Calu3 (cell line): ENCODE measurements at regions of chr7 and their contacts with region 1.

Region 1: GRCh38 chr7:13981070-13981469 is 8.4 kb downstream of the ETV1 start:
- DNase-seq: peak; percentile 74
- H3K4me3 Mint-ChIP-seq: peak overlapping the region; percentile 59
- H3K27ac Mint-ChIP-seq: peak overlapping the region; percentile 87
- H3K4me1 Mint-ChIP-seq: peaks cover 34% of the 10 kb centered on the region
- H3K27me3 Mint-ChIP-seq: no peaks in the 10 kb centered on the region
- CTCF ChIP-seq: no peak

Region 2: DNA sequence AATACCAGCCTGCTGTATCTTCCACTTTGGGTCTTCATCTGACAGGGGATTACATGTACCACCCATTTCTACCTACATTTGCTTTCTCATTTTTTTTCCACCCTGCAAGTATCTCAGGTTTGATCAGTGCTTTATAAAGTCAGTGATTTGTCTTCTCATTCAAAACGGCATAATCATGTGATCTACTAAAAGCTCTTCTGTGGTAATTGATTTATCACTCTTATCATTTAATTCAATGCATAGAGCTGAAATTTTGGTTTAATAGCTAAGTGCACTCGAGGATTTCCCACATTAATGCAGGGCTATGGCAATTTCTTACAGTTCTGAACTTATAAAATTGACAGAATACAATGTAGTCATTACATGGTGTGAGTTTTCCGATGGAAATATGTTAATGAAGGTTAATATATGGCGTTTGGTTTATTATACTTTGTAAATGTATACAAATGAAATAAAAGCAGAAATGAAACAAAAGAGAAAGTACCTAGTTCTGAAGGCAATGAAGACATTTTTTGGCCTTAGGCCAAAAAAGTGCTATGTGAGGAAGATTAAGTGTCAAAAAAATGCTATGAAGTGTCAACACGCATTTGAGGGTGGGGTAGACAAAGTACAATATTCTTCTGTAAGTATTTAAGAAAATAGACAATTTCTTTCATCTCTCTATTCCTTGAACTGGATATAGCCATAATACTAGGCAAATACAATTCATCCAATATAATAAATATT is 448.9 kb before region 1 on chr7:
- CTCF ChIA-PET with region 1: no interaction called
- intact Hi-C with region 1: loop called (anchors 5 kb)
- DNase-seq: no peak
- H3K4me3 Mint-ChIP-seq: no peak overlapping the region
- H3K27ac Mint-ChIP-seq: no peak overlapping the region
- H3K4me1 Mint-ChIP-seq: no peaks in the 10 kb centered on the region
- H3K27me3 Mint-ChIP-seq: no peaks in the 10 kb centered on the region
- CTCF ChIP-seq: no peak

Region 3: GRCh38 chr7:13850185-13850752 is 130.8 kb before region 1 on chr7:
- CTCF ChIA-PET with region 1: no interaction called
- intact Hi-C with region 1: loop called (anchors 2 kb)
- DNase-seq: peak; percentile 64
- H3K4me3 Mint-ChIP-seq: peak overlapping the region; percentile 1
- H3K27ac Mint-ChIP-seq: peak overlapping the region; percentile 37
- H3K4me1 Mint-ChIP-seq: peaks cover 20% of the 10 kb centered on the region
- H3K27me3 Mint-ChIP-seq: no peaks in the 10 kb centered on the region
- CTCF ChIP-seq: no peak

Region 4: GRCh38 chr7:13933091-13933490 is 48.0 kb before region 1 on chr7:
- CTCF ChIA-PET with region 1: no interaction called
- intact Hi-C with region 1: no loop called
- DNase-seq: no peak
- H3K4me3 Mint-ChIP-seq: no peak overlapping the region
- H3K27ac Mint-ChIP-seq: no peak overlapping the region
- H3K4me1 Mint-ChIP-seq: no peaks in the 10 kb centered on the region
- H3K27me3 Mint-ChIP-seq: no peaks in the 10 kb centered on the region
- CTCF ChIP-seq: no peak

Region 5: GRCh38 chr7:14293434-14293833 is 312.4 kb after region 1 on chr7:
- CTCF ChIA-PET with region 1: no interaction called
- intact Hi-C with region 1: no loop called
- DNase-seq: no peak
- H3K4me3 Mint-ChIP-seq: no peak overlapping the region
- H3K27ac Mint-ChIP-seq: no peak overlapping the region
- H3K4me1 Mint-ChIP-seq: no peaks in the 10 kb centered on the region
- H3K27me3 Mint-ChIP-seq: no peaks in the 10 kb centered on the region
- CTCF ChIP-seq: no peak

Region 6: GRCh38 chr7:14407246-14408015 is 426.4 kb after region 1 on chr7:
- CTCF ChIA-PET with region 1: no interaction called
- intact Hi-C with region 1: no loop called
- DNase-seq: no peak
- H3K4me3 Mint-ChIP-seq: no peak overlapping the region
- H3K27ac Mint-ChIP-seq: no peak overlapping the region
- H3K4me1 Mint-ChIP-seq: no peaks in the 10 kb centered on the region
- H3K27me3 Mint-ChIP-seq: no peaks in the 10 kb centered on the region
- CTCF ChIP-seq: no peak